Ovary (tissue), 10 donors: ENCODE measurements at regions of chrX and their contacts with region 1.

Region 1: DNA sequence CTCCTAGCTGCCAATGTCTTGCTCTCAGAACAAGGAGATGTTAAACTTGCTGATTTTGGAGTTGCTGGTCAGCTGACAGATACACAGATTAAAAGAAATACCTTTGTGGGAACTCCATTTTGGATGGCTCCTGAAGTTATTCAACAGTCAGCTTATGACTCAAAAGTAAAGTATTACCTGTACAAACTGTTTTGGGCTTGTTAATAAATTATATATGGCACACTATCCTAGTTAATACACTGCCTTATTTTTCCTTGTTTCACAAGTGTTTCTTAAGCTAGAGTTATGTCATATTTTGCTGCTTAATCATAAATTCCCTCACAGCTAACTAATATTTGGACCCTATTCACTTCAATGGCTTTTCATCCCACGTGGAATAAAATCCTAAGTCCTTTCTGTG is 45.3 kb downstream of the STK26 start:
- DNase-seq: no peak
- H3K4me3 ChIP-seq: no peak overlapping the region
- H3K27ac ChIP-seq: no peak overlapping the region
- H3K4me1 ChIP-seq: no peaks in the 10 kb centered on the region
- H3K27me3 ChIP-seq: no peaks in the 10 kb centered on the region
- CTCF ChIP-seq: no peak
- EP300 ChIP-seq: no peak
- POLR2A ChIP-seq: no peak

Region 2: DNA sequence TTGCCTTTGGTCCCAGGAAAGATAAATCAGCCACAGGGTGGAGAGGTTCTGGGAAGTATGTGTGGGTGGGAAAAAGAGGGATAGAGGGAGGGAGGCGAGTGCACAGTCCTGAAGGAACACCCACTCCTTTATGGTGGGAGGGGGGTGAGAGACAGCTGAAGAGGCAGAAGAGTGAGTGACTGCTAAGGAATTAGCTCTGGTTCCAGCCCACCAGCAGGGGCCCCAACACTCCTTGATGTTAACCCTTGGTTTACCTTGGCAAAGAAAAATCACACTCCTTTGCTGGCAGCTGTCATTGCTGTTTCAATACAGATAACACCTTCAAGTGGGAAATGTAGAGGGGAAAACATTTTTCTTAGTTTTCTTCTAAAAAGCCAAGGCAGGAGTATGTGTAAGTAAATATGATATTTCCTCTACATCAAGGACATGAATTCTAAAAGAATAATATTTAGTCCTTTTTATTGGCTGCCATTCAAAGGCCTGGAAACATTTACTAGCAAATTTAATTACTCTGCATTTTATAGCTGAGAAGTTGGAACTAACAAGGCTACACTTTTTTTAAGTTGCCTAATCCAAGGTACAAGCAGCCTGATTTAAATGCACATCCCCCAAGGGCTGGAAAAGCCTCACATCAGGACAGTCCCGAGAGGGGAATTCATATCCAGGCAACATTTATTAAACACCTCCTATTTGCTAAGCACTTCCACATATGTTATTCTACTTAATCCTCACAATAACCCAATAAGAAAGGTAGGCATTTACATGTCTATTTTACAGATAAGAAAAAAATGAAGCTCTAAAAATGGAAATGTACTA is 808.3 kb after region 1 on chrX:
- intact Hi-C with region 1: loop called in 1 of 4 experiments (anchors 5 kb)
- DNase-seq: peak in 1 of 5 donors; percentile 25
- H3K4me3 ChIP-seq: no peak overlapping the region
- H3K27ac ChIP-seq: no peak overlapping the region
- H3K4me1 ChIP-seq: peaks cover 5% of the 10 kb centered on the region
- H3K27me3 ChIP-seq: no peaks in the 10 kb centered on the region
- CTCF ChIP-seq: no peak
- EP300 ChIP-seq: no peak
- POLR2A ChIP-seq: no peak